Dorsolateral prefrontal cortex (tissue), 120 donors: ENCODE measurements at regions of chr9 and their contacts with region 1.

Region 1: DNA sequence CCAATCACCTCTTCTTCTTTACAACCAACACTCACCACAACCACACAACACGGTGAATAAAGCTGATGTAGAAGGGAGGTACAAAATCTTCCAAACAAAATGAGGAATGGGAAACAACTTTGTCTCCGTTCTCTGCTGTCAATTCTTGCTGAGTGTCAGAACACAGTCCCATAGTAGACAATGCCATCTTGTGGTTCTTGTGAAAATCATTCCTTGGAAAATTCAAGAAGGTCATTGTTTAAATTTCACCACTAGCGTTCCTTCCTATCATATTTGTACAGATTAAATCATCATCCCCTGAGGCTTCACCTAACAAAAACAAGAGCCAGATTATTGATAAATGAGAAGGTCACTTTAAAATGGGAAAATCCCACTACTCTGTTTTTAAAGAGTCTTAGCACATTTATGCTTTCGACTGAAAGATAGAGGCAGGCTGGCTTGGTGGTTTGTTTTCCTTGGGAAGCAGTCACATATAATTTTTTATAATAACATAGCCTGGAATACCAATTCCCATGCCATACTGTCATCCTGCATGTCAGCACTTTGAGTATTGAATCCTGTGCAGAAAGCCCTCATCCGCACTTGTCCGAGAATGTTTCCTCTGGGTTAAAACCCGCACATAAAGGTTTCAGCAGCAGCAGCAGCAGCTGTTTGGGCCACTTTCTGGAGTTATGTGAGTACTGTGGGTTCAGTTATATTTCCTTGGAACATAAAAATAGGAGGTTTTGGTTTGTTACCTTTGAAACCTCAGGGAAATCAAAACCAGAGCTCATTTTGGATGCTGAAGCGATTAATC is 395.0 kb upstream of the SMARCA2 start:
- DNase-seq: no peak
- H3K4me3 ChIP-seq: no peak overlapping the region
- H3K27ac ChIP-seq: no peak overlapping the region
- H3K27me3 ChIP-seq: peaks cover 0 to 20% (median 0%) of the 10 kb centered on the region in 45 donors
- CTCF ChIP-seq: peak in 55 of 56 donors; percentile 16 to 74 (median 56)

Region 2: DNA sequence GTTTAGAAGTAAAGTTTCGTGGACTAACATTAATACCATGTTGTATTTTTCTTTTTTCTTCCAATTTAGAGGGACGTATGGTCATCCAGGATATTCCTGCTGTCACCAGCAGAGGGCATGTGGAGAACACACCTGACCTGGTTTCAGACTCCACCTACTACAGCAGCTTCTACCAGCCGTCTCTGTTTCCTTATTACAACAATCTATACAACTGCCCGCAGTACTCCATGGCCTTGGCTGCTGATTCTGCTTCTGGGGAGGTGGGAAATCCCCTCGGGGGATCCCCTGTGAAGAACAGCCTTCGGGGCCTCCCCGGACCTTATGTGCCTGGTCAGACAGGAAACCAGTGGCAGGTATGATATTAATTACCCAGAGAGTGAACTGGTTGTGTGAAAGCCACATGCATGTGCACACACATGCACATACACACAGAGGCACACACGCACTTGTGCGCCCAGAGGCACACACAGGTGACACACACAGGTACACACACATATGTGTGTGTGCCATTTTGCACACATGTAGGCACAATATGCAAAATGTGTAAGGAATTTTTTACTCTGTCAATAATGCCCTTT is 726.2 kb before region 1 on chr9:
- intact Hi-C with region 1: loop called in 1 of 2 experiments (anchors 10 kb)
- DNase-seq: peak in 5 of 10 donors; percentile 43 to 55 (median 48)
- H3K4me3 ChIP-seq: peak overlapping the region in 3 of 59 donors; percentile 25 to 32 (median 32)
- H3K27ac ChIP-seq: no peak overlapping the region
- H3K27me3 ChIP-seq: peaks cover 0 to 8% (median 0%) of the 10 kb centered on the region in 45 donors
- CTCF ChIP-seq: peak; percentile 46 to 83 (median 73)

Region 3: DNA sequence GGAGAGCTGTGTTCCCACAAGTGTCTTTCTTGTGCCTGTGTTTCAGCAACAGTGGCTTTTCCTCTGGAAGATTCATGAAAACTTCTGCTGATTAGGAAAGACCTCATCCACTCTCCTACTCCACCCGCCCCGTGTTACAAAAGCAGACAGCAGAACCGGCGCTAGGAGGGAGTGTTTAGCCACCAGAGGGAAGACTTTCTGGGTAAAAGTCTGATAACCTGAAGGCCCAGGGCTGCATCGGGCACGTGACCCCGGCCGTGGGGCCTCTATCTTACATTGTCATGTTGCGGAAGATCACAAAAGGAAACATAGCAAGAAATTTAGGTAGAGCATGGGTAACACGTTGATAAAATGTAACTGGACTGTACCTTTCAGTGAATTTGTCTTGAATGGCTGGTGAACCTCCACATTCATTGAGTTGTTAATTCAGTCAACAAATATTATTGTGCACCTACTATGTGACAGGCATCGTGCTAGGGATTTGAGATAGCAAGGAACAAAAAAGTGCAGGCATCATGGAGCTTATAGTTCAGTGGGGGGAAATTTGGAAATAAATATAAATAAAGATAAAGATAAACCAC is 601.9 kb before region 1 on chr9:
- intact Hi-C with region 1: loop called in 1 of 2 experiments (anchors 5 kb)
- DNase-seq: no peak
- H3K4me3 ChIP-seq: no peak overlapping the region
- H3K27ac ChIP-seq: no peak overlapping the region
- H3K27me3 ChIP-seq: peaks cover 0 to 37% (median 7%) of the 10 kb centered on the region in 45 donors
- CTCF ChIP-seq: peak in 26 of 56 donors; percentile 8 to 54 (median 25)

Region 4: DNA sequence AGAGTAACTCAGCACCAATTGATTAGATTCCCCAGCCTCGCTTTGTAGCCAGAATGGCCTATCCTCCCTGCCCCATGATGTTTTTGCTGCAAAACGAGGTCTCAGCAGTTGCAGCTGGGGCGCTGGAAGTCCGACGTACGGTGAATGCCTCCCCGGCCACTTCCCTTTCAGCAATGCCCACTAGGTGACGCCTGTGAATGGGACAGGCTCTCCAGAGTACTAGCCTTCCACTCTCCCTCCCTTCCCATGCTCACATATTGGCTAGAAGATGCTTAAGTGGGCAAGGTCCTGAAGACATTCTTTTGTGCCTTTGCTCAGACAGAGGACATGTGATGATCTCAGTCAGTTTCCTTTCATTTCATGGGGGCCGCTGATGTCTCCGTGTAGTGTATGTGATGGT is 519.2 kb before region 1 on chr9:
- intact Hi-C with region 1: loop called in 1 of 2 experiments (anchors 5 kb)
- DNase-seq: peak in 9 of 10 donors; percentile 3 to 65 (median 36)
- H3K4me3 ChIP-seq: no peak overlapping the region
- H3K27ac ChIP-seq: no peak overlapping the region
- H3K27me3 ChIP-seq: peaks cover 0 to 9% (median 0%) of the 10 kb centered on the region in 45 donors
- CTCF ChIP-seq: peak in 53 of 56 donors; percentile 16 to 72 (median 49)

Region 5: GRCh38 chr9:1460143-1460769 is 159.9 kb before region 1 on chr9:
- intact Hi-C with region 1: loop called in 1 of 2 experiments (anchors 5 kb)
- DNase-seq: no peak
- H3K4me3 ChIP-seq: no peak overlapping the region
- H3K27ac ChIP-seq: no peak overlapping the region
- H3K27me3 ChIP-seq: no peaks in the 10 kb centered on the region
- CTCF ChIP-seq: peak in 52 of 56 donors; percentile 22 to 71 (median 48)

Region 6: DNA sequence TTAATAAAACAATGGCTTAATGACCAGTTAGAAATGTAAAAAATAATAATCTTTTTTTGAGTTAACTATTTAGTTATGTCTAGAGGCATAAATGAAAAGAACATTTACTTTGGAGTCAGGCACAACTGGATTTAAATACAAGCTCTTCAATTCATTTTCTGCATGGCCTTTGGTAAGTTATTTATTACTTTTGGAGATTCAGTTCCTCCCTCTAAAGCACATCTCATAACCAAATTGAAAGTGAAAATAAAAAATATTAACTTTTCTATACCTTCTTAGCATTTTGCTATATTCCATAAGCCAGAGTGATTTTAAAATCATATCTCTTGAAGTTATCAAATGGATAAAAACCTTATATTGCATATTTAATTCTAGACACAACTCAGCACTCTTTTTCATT is 39.9 kb before region 1 on chr9:
- intact Hi-C with region 1: no loop called
- DNase-seq: no peak
- H3K4me3 ChIP-seq: no peak overlapping the region
- H3K27ac ChIP-seq: no peak overlapping the region
- H3K27me3 ChIP-seq: no peaks in the 10 kb centered on the region
- CTCF ChIP-seq: no peak